ENCODE measurements at regions of chr18 and their contacts with region 1.

Region 1: DNA sequence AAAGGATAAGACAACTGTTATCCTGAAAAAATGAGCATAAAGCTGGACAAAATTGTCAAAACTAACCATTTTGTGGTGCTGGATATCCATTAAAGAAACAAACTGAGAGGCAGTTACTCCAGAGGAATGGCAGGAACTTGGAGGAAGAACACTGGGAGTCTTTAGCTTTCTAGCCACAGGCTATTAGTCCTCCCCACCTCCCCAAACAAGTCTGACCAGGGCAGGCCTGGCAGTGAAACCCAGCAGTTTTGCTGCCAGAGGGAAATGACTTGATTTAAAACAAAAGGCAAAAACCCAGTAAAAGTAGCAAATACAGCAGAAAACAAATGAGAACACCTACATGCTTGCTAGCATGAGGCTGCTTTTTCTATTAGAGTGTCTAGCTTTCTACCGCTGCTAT is 34.9 kb downstream of the OSBPL1A start:
- DNase-seq: no peak
- H3K4me3 Mint-ChIP-seq: no peak overlapping the region
- H3K27ac Mint-ChIP-seq: no peak overlapping the region
- H3K4me1 Mint-ChIP-seq: no peaks in the 10 kb centered on the region
- H3K27me3 Mint-ChIP-seq: no peaks in the 10 kb centered on the region

Region 2: GRCh38 chr18:24446953-24447538 is 84.3 kb after region 1 on chr18:
- CTCF ChIA-PET with region 1: interaction called, 10 read pairs
- POLR2A ChIA-PET with region 1: no interaction called
- DNase-seq: no peak
- H3K4me3 Mint-ChIP-seq: no peak overlapping the region
- H3K27ac Mint-ChIP-seq: no peak overlapping the region
- H3K4me1 Mint-ChIP-seq: peaks cover 9% of the 10 kb centered on the region
- H3K27me3 Mint-ChIP-seq: no peaks in the 10 kb centered on the region

Region 3: GRCh38 chr18:24726727-24727492 is 364.2 kb after region 1 on chr18:
- CTCF ChIA-PET with region 1: interaction called, 11 read pairs
- POLR2A ChIA-PET with region 1: no interaction called
- DNase-seq: peak; percentile 56
- H3K4me3 Mint-ChIP-seq: no peak overlapping the region
- H3K27ac Mint-ChIP-seq: no peak overlapping the region
- H3K4me1 Mint-ChIP-seq: no peaks in the 10 kb centered on the region
- H3K27me3 Mint-ChIP-seq: peaks cover 2% of the 10 kb centered on the region